ENCODE measurements at regions of chr1 and their contacts with region 1.

Region 1: DNA sequence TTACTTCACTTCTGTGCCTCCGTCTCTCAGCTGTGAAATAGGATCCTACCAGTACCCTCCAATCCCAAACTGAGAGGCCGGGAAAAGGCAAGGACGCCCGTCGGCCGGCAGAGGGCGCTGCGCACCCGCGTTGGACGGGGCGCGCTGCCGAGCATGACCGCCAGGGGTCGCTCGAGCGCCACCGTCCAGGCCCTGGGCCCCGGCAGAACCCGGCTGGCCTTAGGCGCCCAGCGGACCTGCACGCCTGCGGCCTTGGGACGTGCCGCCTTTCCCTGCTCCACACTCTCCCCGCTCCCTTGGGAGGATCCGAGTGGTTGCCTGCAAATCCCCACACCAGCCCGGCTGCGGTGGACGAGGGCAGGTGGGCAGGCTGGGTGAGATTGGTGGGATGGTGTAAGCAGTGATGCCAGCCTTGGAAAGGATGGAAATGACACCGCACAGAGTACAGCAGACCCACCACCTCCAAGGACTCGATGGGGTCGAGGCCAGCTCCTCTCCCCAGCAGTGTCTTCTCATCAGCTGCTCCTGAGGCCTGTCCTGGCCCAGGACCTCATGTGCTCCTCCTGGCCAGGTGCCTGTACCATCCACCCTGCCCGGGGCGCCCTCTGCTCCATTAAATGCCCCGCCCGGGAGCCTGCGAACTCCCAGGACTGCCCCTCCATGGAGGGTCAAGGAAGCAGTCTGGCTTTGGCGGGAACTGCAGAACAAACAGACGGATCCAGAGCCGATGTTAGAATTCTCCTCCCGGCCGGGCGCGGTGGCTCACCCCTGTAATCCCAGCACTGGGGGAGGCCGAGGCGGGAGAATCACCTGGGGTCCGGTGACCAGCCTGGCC is 47.4 kb upstream of the LBR start:
- DNase-seq: no peak
- H3K4me3 ChIP-seq: no peak overlapping the region
- H3K27ac ChIP-seq: no peak overlapping the region
- H3K4me1 ChIP-seq: peaks cover 7% of the 10 kb centered on the region
- H3K27me3 ChIP-seq: no peaks in the 10 kb centered on the region
- CTCF ChIP-seq: peak; percentile 97 to 100 (median 99)

Region 2: DNA sequence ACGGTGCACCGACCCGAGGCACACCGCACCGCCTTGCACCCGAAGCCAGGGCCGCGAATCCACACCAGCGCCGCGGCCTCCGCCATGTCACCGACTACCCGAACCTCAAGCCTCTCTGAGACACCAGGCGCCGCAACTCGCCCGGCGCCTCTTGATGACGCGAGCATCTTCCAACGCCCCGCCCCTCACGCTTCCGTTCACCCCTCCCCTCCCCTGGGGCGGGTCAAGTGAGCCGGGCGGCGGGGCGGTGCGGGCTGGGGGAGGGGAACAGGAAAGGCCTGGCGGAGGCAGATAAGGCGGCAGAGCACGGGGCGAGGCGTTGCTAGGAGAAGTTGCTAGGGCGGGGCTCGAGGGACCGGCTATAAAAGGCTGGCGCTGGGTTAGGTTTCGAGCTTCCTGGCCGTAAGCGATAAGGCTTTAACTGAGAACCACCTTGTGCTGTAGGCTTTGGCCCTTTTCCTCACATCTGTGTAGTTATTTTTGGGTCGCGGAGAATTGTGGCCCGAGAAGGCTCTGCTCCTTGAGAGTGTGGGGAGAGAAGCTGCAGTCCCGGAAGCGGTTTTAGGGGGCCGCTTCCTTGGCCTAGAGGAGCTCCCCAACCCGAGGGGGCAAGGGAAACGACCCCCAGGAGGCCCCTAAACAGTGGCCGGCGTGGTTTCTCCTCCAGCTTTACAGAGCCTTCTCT is 524.2 kb after region 1 on chr1 and contains the start of gene SDE2:
- dilution Hi-C with region 1: loop called (anchors 25 kb)
- DNase-seq: peak; percentile 85
- H3K4me3 ChIP-seq: peak within 1 kb of the TSS; percentile 85 to 98 (median 94)
- H3K27ac ChIP-seq: peak within 1 kb of the TSS; percentile 98
- H3K4me1 ChIP-seq: peaks cover 27% of the 10 kb centered on the region
- H3K27me3 ChIP-seq: no peaks in the 10 kb centered on the region
- CTCF ChIP-seq: no peak
- polyA plus RNA-seq, gene SDE2: 11.3 to 15.9 TPM (median 13.4 TPM) in 3 replicates

Measured in keratinocyte (primary cell).